MCF 10A (cell line): ENCODE measurements at regions of chr11 and their contacts with region 1.

Region 1: GRCh38 chr11:96242971-96243647 is 99.9 kb downstream of the MAML2 start:
- DNase-seq: peak; percentile 97
- H3K4me3 Mint-ChIP-seq: peak overlapping the region; percentile 72
- H3K27ac Mint-ChIP-seq: peak overlapping the region; percentile 83
- H3K4me1 Mint-ChIP-seq: peaks cover 32% of the 10 kb centered on the region
- H3K27me3 Mint-ChIP-seq: no peaks in the 10 kb centered on the region
- CTCF ChIP-seq: no peak

Region 2: DNA sequence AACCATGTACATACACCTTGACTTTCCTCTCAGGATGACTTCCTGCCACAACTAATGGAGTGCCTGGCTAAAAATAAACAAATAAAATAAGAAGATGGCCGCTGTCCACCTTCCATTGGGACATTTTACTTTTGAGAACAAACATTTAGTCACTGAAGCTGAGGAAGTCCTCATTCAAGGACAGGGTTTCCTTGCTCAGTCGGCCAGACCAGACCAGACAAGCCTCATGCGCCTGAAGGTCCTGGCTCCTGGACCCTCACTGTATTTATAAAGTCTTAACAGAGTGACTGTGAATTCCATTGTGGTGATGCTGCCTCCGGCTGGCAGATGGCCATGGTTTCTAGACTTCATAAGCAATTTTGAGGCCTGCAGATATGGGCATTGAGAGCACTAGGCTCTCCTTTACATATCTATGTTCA is 14.6 kb before region 1 on chr11:
- CTCF ChIA-PET with region 1: interaction called, 15 read pairs
- POLR2A ChIA-PET with region 1: interaction called, 93 read pairs
- intact Hi-C with region 1: no loop called
- DNase-seq: peak; percentile 92
- H3K4me3 Mint-ChIP-seq: no peak overlapping the region
- H3K27ac Mint-ChIP-seq: peak overlapping the region; percentile 97
- H3K4me1 Mint-ChIP-seq: peaks cover 48% of the 10 kb centered on the region
- H3K27me3 Mint-ChIP-seq: no peaks in the 10 kb centered on the region
- CTCF ChIP-seq: no peak

Region 3: GRCh38 chr11:96260067-96260511 is 17.0 kb after region 1 on chr11:
- CTCF ChIA-PET with region 1: interaction called, 4 read pairs
- POLR2A ChIA-PET with region 1: interaction called, 19 read pairs
- intact Hi-C with region 1: no loop called
- DNase-seq: no peak
- H3K4me3 Mint-ChIP-seq: no peak overlapping the region
- H3K27ac Mint-ChIP-seq: peak overlapping the region; percentile 77
- H3K4me1 Mint-ChIP-seq: peaks cover 65% of the 10 kb centered on the region
- H3K27me3 Mint-ChIP-seq: no peaks in the 10 kb centered on the region
- CTCF ChIP-seq: no peak

Region 4: GRCh38 chr11:96279018-96279895 is 36.1 kb after region 1 on chr11:
- CTCF ChIA-PET with region 1: interaction called, 8 read pairs
- POLR2A ChIA-PET with region 1: interaction called, 18 read pairs
- intact Hi-C with region 1: no loop called
- DNase-seq: peak; percentile 66
- H3K4me3 Mint-ChIP-seq: no peak overlapping the region
- H3K27ac Mint-ChIP-seq: peak overlapping the region; percentile 25
- H3K4me1 Mint-ChIP-seq: peaks cover 35% of the 10 kb centered on the region
- H3K27me3 Mint-ChIP-seq: no peaks in the 10 kb centered on the region
- CTCF ChIP-seq: no peak